Mammary epithelial cell (primary cell): ENCODE measurements at regions of chr22 and their contacts with region 1.

Region 1: GRCh38 chr22:38051900-38052862 is 5.0 kb upstream of the PICK1 start:
- DNase-seq: peak; percentile 50
- H3K4me3 ChIP-seq: no peak overlapping the region
- H3K27ac ChIP-seq: no peak overlapping the region
- H3K4me1 ChIP-seq: peaks cover 6% of the 10 kb centered on the region
- H3K27me3 ChIP-seq: no peaks in the 10 kb centered on the region
- CTCF ChIP-seq: peak; percentile 73 to 83

Region 2: DNA sequence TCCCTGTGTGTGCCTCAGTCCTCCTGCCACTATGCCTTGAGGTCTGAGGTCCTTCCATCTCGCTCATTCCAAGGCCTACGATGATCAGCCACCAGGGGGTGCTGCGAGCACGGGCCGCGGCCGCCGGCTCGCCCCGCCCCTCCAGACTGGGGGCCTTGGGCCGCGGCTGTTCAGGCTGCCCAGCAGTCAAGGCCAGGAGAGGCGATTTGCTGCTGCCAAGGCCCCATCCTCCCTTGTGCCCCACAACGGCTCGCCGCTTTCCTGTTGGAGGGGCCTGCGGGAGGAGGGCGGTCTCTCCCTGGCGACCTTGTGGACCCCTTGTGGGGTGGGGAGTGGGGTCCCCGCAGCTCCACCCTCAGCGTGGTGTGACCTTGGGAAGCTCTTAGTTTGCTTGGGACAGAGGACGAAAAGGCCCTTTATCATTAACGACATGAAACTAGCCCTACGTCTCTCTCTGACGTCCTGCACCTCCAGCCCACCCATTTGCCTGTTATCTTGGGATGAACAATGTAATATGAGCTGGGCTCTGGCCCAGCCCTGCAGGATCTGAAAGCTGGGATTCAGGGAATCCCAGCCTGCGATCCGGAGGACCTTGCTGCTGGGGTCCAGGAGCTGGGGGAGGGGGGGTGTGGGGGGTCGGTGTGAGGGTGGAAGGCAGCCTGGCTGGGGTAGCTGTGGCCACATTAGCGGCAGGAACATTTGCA is 234.3 kb before region 1 on chr22:
- CTCF ChIA-PET with region 1: no interaction called
- dilution Hi-C with region 1: no loop called
- in situ Hi-C with region 1: no loop called
- intact Hi-C with region 1: loop called (anchors 5 kb)
- DNase-seq: peak; percentile 58
- H3K4me3 ChIP-seq: peak overlapping the region in 1 of 3 experiments; percentile 26
- H3K27ac ChIP-seq: no peak overlapping the region
- H3K4me1 ChIP-seq: peaks cover 7% of the 10 kb centered on the region
- H3K27me3 ChIP-seq: peaks cover 2% of the 10 kb centered on the region
- CTCF ChIP-seq: peak; percentile 81 to 90

Region 3: DNA sequence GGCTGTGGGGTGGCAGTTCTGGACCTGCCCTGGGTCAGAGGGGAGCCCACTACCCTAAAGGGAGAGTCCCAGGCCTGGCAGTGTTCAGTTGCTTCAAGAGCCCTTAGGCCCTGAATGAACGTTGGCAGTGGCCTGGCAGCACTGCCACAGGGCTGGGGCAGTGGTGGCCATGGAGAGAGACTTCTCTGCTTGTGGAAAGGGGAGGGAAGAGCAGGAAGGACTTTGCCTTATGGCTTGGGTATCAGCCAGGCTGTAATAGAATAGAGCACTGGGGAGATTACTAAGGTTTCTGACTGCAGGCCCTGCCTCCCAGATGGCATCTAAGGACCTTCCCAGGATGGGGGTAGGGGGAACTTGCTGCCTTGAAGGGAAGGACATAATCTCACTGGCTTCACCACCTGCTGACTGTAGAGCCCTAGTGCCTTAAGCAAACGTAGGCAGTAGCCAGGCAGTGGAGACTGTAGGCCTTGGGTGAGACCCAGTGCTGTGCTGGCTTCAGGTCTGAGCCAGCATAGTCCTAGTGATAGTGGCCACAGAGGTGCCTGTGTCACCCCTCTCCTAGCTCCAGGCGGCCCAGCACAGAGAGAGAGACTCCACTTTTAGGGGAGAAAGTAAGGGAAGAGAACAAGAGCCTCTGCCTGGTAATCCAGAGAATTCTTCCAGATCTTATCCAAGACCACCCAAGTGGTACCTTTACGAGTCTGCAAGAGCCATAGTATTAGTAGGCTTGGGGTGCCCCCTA is 101.8 kb after region 1 on chr22:
- CTCF ChIA-PET with region 1: no interaction called
- dilution Hi-C with region 1: no loop called
- in situ Hi-C with region 1: no loop called
- intact Hi-C with region 1: loop called (anchors 1 kb)
- DNase-seq: no peak
- H3K4me3 ChIP-seq: no peak overlapping the region
- H3K27ac ChIP-seq: no peak overlapping the region
- H3K4me1 ChIP-seq: no peaks in the 10 kb centered on the region
- H3K27me3 ChIP-seq: no peaks in the 10 kb centered on the region
- CTCF ChIP-seq: no peak

Region 4: DNA sequence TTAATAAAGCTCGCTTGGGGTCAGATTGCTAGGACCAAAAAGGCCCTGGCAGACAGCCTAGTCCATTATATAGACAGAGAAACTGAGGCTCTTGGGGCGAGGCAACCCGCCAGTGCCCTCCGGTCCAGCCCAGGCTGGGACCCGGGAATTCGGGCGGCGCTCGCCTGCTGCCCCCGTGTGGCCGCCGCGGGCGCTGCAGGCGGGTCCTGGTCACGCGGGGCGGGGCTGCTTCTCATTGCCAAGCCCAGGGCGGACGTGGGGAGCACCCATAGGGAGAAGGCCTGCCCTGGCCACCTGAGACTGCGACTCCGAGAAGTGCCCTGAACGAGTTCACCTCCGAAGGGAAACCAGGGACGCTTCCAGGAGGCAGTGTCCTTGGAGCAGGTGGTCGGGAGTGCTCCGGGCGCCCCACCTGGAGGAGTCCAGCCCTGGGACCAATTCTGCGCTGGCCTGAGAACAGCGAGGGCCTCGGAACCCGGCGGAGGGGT is 301.0 kb after region 1 on chr22:
- CTCF ChIA-PET with region 1: no interaction called
- dilution Hi-C with region 1: no loop called
- in situ Hi-C with region 1: no loop called
- intact Hi-C with region 1: loop called (anchors 1 kb)
- DNase-seq: peak; percentile 52
- H3K4me3 ChIP-seq: no peak overlapping the region
- H3K27ac ChIP-seq: no peak overlapping the region
- H3K4me1 ChIP-seq: peaks cover 11% of the 10 kb centered on the region
- H3K27me3 ChIP-seq: no peaks in the 10 kb centered on the region
- CTCF ChIP-seq: peak; percentile 76 to 93

Region 5: GRCh38 chr22:38506118-38506962 is 454.2 kb after region 1 on chr22 and contains the start of gene DDX17:
- CTCF ChIA-PET with region 1: interaction called, 5 read pairs
- dilution Hi-C with region 1: no loop called
- in situ Hi-C with region 1: no loop called
- intact Hi-C with region 1: loop called (anchors 10 kb)
- DNase-seq: peak; percentile 92
- H3K4me3 ChIP-seq: peak within 1 kb of the TSS; percentile 83 to 96 (median 90)
- H3K27ac ChIP-seq: peak within 1 kb of the TSS; percentile 98
- H3K4me1 ChIP-seq: peaks cover 12% of the 10 kb centered on the region
- H3K27me3 ChIP-seq: no peaks in the 10 kb centered on the region
- CTCF ChIP-seq: no peak
- total RNA-seq, gene DDX17: 235 to 405 TPM

Region 6: GRCh38 chr22:38718414-38718813 is 666.2 kb after region 1 on chr22:
- CTCF ChIA-PET with region 1: no interaction called
- dilution Hi-C with region 1: no loop called
- in situ Hi-C with region 1: no loop called
- intact Hi-C with region 1: loop called (anchors 1 kb)
- DNase-seq: peak; percentile 76
- H3K4me3 ChIP-seq: no peak overlapping the region
- H3K27ac ChIP-seq: peak overlapping the region; percentile 52
- H3K4me1 ChIP-seq: peaks cover 11% of the 10 kb centered on the region
- H3K27me3 ChIP-seq: no peaks in the 10 kb centered on the region
- CTCF ChIP-seq: peak; percentile 72 to 82